BJ (cell line): ENCODE measurements at regions of chr22 and their contacts with region 1.

Region 1: DNA sequence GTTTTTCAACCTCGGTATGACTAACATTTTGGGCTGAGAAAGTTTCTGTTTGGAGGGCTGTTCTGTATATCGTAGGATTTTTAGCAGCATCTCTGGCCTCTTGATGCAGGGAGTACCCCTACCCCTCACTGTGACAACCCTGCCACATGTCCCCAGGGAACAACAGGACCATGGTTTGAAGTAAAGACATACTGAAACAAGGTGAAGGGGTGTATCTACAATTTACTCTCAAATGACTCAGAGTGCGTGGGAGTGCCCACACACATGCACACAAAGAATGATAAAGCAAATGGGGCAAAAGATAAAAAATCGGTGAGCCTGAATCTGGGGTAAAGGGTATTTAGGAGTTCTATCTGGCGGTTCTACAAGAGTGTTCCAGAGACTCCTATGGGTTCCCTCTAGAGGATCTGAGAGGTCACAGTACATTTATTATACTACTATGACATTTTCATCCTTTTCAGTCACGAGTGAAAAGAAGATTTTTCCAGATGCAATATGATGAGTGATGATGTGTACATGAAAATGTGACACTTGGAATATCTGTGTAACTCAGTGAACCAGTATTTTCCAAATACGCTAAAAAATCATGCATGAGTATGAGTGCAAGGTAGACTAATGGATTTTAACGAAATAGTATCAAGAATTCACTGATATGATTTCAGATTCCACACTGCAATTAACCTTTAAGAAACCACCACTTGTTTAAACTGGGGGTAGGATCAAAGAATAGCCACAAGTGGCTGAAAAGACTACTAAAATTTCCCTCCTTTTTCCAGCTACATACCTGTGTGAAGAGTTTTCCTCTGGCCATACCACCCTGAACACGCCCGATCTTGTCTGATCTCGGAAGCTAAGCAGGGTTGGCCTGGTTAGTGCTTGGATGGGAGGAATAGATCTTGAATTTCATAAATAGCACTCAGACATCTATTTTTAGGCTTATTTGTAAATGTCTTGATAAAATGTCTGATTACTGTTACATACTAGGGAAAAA is 56.3 kb upstream of the YPEL1 start:
- DNase-seq: no peak
- H3K4me3 ChIP-seq: no peak overlapping the region
- H3K27me3 ChIP-seq: no peaks in the 10 kb centered on the region
- CTCF ChIP-seq: no peak

Region 2: DNA sequence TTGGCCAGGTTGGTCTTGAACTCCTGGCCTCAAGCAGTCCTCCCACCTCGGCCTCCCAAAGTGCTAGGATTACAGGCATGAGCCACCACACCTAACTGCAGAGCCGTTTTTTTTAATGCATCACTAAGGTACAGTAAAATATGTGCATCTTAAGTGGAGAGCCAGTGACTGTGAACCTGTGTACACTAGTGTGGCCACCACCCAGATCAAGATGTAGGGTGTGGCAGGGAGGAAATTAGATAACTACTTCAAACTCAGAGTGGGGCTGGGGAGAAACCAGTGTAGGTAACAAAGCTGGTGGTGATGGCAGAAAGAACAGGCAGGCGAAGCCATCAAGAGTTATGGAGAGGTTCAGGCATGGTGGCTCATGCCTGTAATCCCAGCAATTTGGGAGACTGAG is 918.7 kb before region 1 on chr22:
- CTCF ChIA-PET with region 1: no interaction called
- POLR2A ChIA-PET with region 1: interaction called, 12 read pairs
- DNase-seq: no peak
- H3K4me3 ChIP-seq: no peak overlapping the region
- H3K27me3 ChIP-seq: no peaks in the 10 kb centered on the region
- CTCF ChIP-seq: no peak